Right ventricle myocardium inferior (tissue), 1 donor: ENCODE measurements at regions of chr3 and their contacts with region 1.

Region 1: DNA sequence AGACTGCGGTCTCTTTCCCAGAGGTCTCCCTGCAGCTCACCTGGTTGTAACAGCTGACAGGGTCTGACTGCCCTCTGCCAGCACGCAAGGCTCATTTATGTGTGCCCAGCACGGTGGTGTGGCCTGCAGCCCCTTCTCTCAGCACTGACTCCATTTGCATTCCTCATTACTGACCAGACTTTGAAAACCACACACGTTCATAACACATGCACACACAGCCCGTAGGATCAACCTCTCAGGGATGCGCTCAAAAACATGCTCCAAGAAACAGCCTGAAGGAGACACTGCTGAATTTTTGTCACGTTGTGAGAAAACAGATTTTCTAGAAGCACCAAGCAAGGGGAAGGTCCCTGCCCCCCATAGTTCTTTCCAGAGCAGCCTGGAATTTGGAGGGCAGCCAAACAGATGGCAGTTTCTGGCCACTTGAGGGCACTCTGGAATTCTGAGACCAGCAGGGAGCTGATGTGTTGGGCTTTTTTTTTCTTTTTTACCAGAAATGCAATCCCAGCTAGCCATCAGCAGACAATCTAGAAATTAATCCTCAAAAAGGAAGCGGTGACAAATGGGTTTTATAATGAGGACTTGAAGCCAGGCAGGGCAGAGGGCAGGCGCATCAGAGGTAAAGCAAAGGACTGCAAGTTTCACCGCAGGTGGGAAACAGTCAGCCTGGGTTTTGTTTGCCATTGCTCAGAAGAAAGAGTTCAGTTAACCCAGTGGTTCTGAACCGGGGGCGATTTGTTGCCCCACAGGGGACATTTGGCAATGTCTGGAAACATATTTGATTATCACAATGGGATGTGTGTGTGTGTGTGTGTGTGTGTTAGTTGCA is 170.5 kb upstream of the PROK2 start:
- DNase-seq: no peak
- ATAC-seq: peak; percentile 58

Region 2: DNA sequence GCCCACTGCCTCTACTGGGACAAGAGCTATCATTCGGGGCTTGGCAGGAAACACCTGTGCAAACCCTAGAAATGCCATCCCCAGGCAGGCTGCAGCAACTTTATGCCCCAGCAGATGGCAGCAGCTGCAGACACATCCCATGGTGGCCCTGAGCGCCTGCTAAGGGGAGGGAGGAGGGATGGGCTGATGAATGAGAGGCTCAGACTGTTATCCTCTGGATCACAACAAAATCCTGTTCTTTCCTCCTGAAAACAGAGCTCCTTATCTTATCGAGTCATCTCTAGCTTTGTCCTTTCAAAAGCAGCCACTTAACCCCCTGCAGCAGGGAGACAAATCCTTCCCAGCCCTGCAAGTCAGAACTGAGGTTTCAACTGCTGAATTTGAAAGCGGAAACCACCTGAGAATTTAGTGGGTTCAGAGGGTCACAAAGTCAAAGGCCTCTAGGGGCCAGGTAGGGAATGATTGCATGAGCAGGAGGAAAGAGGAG is 80.0 kb before region 1 on chr3:
- intact Hi-C with region 1: loop called (anchors 10 kb)
- DNase-seq: peak; percentile 85
- ATAC-seq: peak; percentile 90

Region 3: GRCh38 chr3:71984843-71985613 is 29.6 kb after region 1 on chr3:
- intact Hi-C with region 1: no loop called
- DNase-seq: no peak
- ATAC-seq: no peak